Heart right ventricle (tissue), 16 donors: ENCODE measurements at regions of chr21 and their contacts with region 1.

Region 1: DNA sequence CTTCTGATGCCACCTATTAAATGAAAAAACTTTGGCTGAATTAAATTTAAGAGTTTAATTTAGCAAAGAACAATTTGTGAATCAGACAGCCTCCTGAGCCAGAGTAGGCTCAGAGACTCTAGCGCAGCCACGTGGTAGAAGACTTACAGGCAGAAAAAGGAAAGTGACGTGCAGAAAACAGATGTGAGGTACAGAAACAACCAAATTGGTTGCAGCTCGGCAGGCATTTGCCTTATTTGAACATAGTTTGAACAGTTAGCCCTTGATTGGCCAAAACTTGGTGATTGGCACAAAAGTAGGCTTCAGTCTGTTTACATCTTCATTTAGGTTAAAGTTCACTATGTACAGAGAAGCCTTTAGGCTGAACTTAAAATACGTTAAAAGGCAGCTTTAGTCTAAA is 22.9 kb downstream of the TCP10L start:
- DNase-seq: peak in 1 of 2 donors; percentile 64
- ATAC-seq: peak in 7 of 8 donors; percentile 47 to 92 (median 82)
- H3K4me3 ChIP-seq: no peak overlapping the region
- H3K27ac ChIP-seq: peak overlapping the region in 8 of 10 donors; percentile 10 to 67 (median 57)
- H3K4me1 ChIP-seq: peaks cover 0 to 15% (median 6%) of the 10 kb centered on the region in 9 donors
- H3K27me3 ChIP-seq: no peaks in the 10 kb centered on the region
- CTCF ChIP-seq: peak; percentile 32 to 82 (median 58)

Region 2: GRCh38 chr21:32494934-32495703 is 67.3 kb before region 1 on chr21:
- intact Hi-C with region 1: no loop called
- DNase-seq: no peak
- ATAC-seq: no peak
- H3K4me3 ChIP-seq: no peak overlapping the region
- H3K27ac ChIP-seq: peak overlapping the region in 4 of 10 donors; percentile 8 to 62 (median 16)
- H3K4me1 ChIP-seq: peaks cover 11 to 76% (median 44%) of the 10 kb centered on the region in 9 donors
- H3K27me3 ChIP-seq: no peaks in the 10 kb centered on the region
- CTCF ChIP-seq: no peak

Region 3: GRCh38 chr21:32520875-32521735 is 41.3 kb before region 1 on chr21:
- intact Hi-C with region 1: loop called in 5 of 10 experiments (anchors 5 kb)
- DNase-seq: peak; percentile 91 to 96
- ATAC-seq: peak; percentile 65 to 81 (median 78)
- H3K4me3 ChIP-seq: peak overlapping the region in 2 of 10 donors; percentile 2 to 7
- H3K27ac ChIP-seq: peak overlapping the region; percentile 43 to 93 (median 88)
- H3K4me1 ChIP-seq: peaks cover 30 to 74% (median 66%) of the 10 kb centered on the region in 9 donors
- H3K27me3 ChIP-seq: no peaks in the 10 kb centered on the region
- CTCF ChIP-seq: no peak

Region 4: GRCh38 chr21:32612075-32612998 is 49.9 kb after region 1 on chr21 and contains the start of gene CFAP298:
- intact Hi-C with region 1: loop called in 1 of 10 experiments (anchors 5 kb)
- DNase-seq: peak; percentile 83 to 91
- ATAC-seq: peak; percentile 94 to 97 (median 95)
- H3K4me3 ChIP-seq: peak within 1 kb of the TSS; percentile 68 to 99 (median 88)
- H3K27ac ChIP-seq: peak within 1 kb of the TSS; percentile 30 to 97 (median 92)
- H3K4me1 ChIP-seq: peaks cover 0 to 29% (median 18%) of the 10 kb centered on the region in 9 donors
- H3K27me3 ChIP-seq: no peaks in the 10 kb centered on the region
- CTCF ChIP-seq: no peak
- total RNA-seq, gene CFAP298: 15.8 to 23.7 (median 21.6) TPM

Region 5: GRCh38 chr21:32868631-32869454 is 306.4 kb after region 1 on chr21:
- intact Hi-C with region 1: no loop called
- DNase-seq: no peak
- ATAC-seq: no peak
- H3K4me3 ChIP-seq: no peak overlapping the region
- H3K27ac ChIP-seq: no peak overlapping the region
- H3K4me1 ChIP-seq: no peaks in the 10 kb centered on the region
- H3K27me3 ChIP-seq: peaks cover 0 to 10% (median under 1%) of the 10 kb centered on the region in 7 donors
- CTCF ChIP-seq: no peak